ENCODE measurements at regions of chr19 and their contacts with region 1.

Region 1: DNA sequence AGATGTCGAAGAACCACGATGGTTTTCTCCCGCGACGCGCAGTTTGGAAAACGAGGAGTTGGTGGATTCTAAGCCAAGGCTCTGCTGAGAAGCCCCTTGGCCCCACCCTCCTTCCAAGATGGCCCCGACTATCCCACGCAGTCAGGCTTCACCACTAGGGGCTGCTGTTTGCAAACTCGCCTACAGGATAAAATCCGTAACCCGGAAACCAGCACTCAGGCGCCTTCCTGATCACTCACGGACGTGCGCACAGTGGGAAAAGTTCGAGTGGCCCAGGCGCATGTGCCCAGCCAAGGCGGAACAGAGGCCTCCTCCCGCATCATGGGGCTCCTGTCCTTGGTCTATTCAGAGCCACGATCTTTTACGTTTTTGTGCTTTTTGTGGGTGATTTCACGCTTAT is 19.2 kb upstream of the UQCR11 start:
- DNase-seq: peak; percentile 52
- H3K4me3 ChIP-seq: no peak overlapping the region
- H3K27ac ChIP-seq: no peak overlapping the region
- H3K4me1 ChIP-seq: no peaks in the 10 kb centered on the region
- H3K27me3 ChIP-seq: no peaks in the 10 kb centered on the region
- CTCF ChIP-seq: peak; percentile 49

Region 2: DNA sequence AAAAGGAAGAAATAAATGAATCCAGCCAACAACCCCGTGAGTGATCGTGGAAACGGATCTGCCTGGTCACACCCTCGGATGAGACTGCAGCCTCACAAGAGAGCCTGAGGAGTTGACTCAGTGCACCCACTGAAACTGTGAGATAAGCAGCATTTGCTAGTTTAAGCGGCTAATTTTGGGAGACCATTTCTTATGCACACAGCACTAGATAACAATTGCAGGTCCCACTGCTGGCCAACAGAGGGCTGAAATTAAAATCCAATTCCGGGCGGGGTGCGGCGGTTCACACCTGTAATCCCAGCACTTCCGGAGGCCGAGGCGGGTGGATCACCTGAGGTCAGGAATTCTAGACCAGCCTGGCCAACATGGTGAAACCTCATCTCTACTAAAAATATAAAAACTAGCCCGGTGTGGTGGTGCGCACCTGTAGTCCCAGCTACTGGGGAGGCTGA is 22.8 kb before region 1 on chr19:
- intact Hi-C with region 1: no loop called
- DNase-seq: no peak
- H3K4me3 ChIP-seq: no peak overlapping the region
- H3K27ac ChIP-seq: no peak overlapping the region
- H3K4me1 ChIP-seq: peaks cover 17% of the 10 kb centered on the region
- H3K27me3 ChIP-seq: no peaks in the 10 kb centered on the region
- CTCF ChIP-seq: no peak

Region 3: DNA sequence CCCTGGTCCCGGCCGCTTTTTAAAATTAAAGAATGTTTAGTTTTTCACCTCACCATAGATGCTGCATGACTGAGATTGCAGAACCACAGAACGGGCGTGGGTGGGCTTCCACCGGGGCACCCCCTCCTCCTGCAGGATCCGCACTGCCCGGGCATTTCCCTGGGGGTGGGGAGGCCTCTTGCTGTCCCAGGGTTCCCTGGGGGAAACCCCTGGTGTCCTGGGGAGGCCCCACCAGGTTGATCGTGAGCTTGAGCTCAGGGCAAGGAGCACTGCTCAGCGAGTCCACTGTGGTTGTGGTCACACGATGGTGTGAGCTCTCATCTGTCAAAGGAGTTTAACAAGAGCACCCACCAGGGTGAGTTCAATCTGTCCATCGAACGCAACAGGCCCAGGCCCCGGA is 39.4 kb after region 1 on chr19:
- intact Hi-C with region 1: loop called (anchors 5 kb)
- DNase-seq: no peak
- H3K4me3 ChIP-seq: no peak overlapping the region
- H3K27ac ChIP-seq: no peak overlapping the region
- H3K4me1 ChIP-seq: no peaks in the 10 kb centered on the region
- H3K27me3 ChIP-seq: peaks cover 13% of the 10 kb centered on the region
- CTCF ChIP-seq: no peak

Measured in colonic mucosa (tissue), 4 donors.